CD8-positive, alpha-beta T cell (primary cell): ENCODE measurements at regions of chr10 and their contacts with region 1.

Region 1: GRCh38 chr10:119686439-119687191 is 35.4 kb downstream of the BAG3 start:
- DNase-seq: peak; percentile 52 to 89 (median 83)
- ATAC-seq: peak; percentile 95
- H3K4me3 ChIP-seq: peak overlapping the region; percentile 41 to 42
- H3K4me3 Mint-ChIP-seq: peak overlapping the region; percentile 79
- H3K27ac ChIP-seq: peak overlapping the region in 1 of 2 experiments; percentile 36
- H3K27ac Mint-ChIP-seq: peak overlapping the region; percentile 37
- H3K4me1 ChIP-seq: peaks cover 8% of the 10 kb centered on the region
- H3K4me1 Mint-ChIP-seq: peaks cover 16% of the 10 kb centered on the region
- H3K27me3 ChIP-seq: no peaks in the 10 kb centered on the region
- H3K27me3 Mint-ChIP-seq: peaks cover 4% of the 10 kb centered on the region
- CTCF ChIP-seq: peak; percentile 92

Region 2: DNA sequence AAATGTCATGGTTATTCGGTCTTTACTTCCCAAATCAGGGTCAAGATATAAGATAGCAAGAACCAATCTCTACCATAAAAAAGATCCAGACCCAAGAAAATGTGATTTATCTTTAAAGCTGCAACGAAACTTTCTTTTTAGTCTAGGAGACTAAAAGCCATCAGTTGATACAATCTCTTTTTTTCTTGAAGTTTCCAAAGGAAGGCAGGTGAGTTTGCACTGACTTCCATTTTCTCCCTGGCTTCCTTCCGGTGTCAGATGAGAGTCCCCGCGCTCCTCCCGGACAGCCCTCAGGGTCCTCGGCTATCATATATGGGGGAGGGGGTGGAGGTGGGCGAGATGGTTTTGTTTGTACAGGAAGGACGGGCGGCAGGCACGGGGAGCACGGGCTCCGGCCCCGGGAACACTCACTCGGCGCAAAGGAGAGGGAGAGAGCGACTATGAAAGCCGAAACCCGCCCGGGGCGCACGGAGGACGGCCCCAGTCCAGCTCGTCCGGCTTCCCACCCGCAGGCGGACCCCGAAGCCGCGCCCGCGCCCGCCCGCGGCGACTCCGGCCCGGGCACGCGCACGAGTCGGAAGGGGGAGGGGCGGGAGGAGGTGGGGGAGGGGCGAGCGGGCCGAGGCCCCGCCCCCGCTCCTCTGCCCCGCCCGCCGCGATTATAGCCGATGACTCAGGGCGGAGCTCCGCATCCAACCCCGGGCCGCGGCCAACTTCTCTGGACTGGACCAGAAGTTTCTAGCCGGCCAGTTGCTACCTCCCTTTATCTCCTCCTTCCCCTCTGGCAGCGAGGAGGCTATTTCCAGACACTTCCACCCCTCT is 35.7 kb before region 1 on chr10 and contains the start of gene BAG3:
- CTCF ChIA-PET with region 1: interaction called, 16 read pairs
- POLR2A ChIA-PET with region 1: interaction called, 4 read pairs
- intact Hi-C with region 1: loop called in 1 of 2 experiments (anchors 2 kb)
- DNase-seq: peak; percentile 57 to 88 (median 76)
- ATAC-seq: peak; percentile 76
- H3K4me3 ChIP-seq: peak within 1 kb of the TSS; percentile 94 to 95
- H3K4me3 Mint-ChIP-seq: peak within 1 kb of the TSS; percentile 98
- H3K27ac ChIP-seq: peak within 1 kb of the TSS; percentile 78 to 88
- H3K27ac Mint-ChIP-seq: peak within 1 kb of the TSS; percentile 95
- H3K4me1 ChIP-seq: peaks cover 36% of the 10 kb centered on the region
- H3K4me1 Mint-ChIP-seq: peaks cover 44% of the 10 kb centered on the region
- H3K27me3 ChIP-seq: no peaks in the 10 kb centered on the region
- H3K27me3 Mint-ChIP-seq: no peaks in the 10 kb centered on the region
- CTCF ChIP-seq: no peak
- total RNA-seq, gene BAG3: 20.6 to 21.8 TPM

Region 3: GRCh38 chr10:119670717-119671116 is 15.9 kb before region 1 on chr10:
- CTCF ChIA-PET with region 1: interaction called, 38 read pairs
- POLR2A ChIA-PET with region 1: no interaction called
- intact Hi-C with region 1: no loop called
- DNase-seq: no peak
- ATAC-seq: no peak
- H3K4me3 ChIP-seq: no peak overlapping the region
- H3K4me3 Mint-ChIP-seq: no peak overlapping the region
- H3K27ac ChIP-seq: no peak overlapping the region
- H3K27ac Mint-ChIP-seq: no peak overlapping the region
- H3K4me1 ChIP-seq: peaks cover 6% of the 10 kb centered on the region
- H3K4me1 Mint-ChIP-seq: peaks cover 8% of the 10 kb centered on the region
- H3K27me3 ChIP-seq: no peaks in the 10 kb centered on the region
- H3K27me3 Mint-ChIP-seq: no peaks in the 10 kb centered on the region
- CTCF ChIP-seq: no peak

Region 4: GRCh38 chr10:119750391-119751230 is 64.0 kb after region 1 on chr10:
- CTCF ChIA-PET with region 1: interaction called, 19 read pairs
- POLR2A ChIA-PET with region 1: no interaction called
- intact Hi-C with region 1: loop called (anchors 2 to 10 kb)
- DNase-seq: peak; percentile 6 to 74 (median 53)
- ATAC-seq: peak; percentile 95
- H3K4me3 ChIP-seq: no peak overlapping the region
- H3K4me3 Mint-ChIP-seq: no peak overlapping the region
- H3K27ac ChIP-seq: no peak overlapping the region
- H3K27ac Mint-ChIP-seq: no peak overlapping the region
- H3K4me1 ChIP-seq: no peaks in the 10 kb centered on the region
- H3K4me1 Mint-ChIP-seq: peaks cover 4% of the 10 kb centered on the region
- H3K27me3 ChIP-seq: no peaks in the 10 kb centered on the region
- H3K27me3 Mint-ChIP-seq: no peaks in the 10 kb centered on the region
- CTCF ChIP-seq: peak; percentile 77

Region 5: GRCh38 chr10:120336911-120337540 is 650.4 kb after region 1 on chr10:
- CTCF ChIA-PET with region 1: interaction called, 3 read pairs
- POLR2A ChIA-PET with region 1: no interaction called
- intact Hi-C with region 1: loop called in 1 of 2 experiments (anchors 2 kb)
- DNase-seq: peak; percentile 7 to 57 (median 43)
- ATAC-seq: no peak
- H3K4me3 ChIP-seq: no peak overlapping the region
- H3K4me3 Mint-ChIP-seq: no peak overlapping the region
- H3K27ac ChIP-seq: no peak overlapping the region
- H3K27ac Mint-ChIP-seq: no peak overlapping the region
- H3K4me1 ChIP-seq: no peaks in the 10 kb centered on the region
- H3K4me1 Mint-ChIP-seq: no peaks in the 10 kb centered on the region
- H3K27me3 ChIP-seq: no peaks in the 10 kb centered on the region
- H3K27me3 Mint-ChIP-seq: peaks cover 17% of the 10 kb centered on the region
- CTCF ChIP-seq: peak; percentile 62

Region 6: GRCh38 chr10:121188005-121188404 is 1501.4 kb after region 1 on chr10:
- CTCF ChIA-PET with region 1: no interaction called
- POLR2A ChIA-PET with region 1: no interaction called
- intact Hi-C with region 1: no loop called
- DNase-seq: no peak
- ATAC-seq: no peak
- H3K4me3 ChIP-seq: no peak overlapping the region
- H3K4me3 Mint-ChIP-seq: no peak overlapping the region
- H3K27ac ChIP-seq: no peak overlapping the region
- H3K27ac Mint-ChIP-seq: no peak overlapping the region
- H3K4me1 ChIP-seq: no peaks in the 10 kb centered on the region
- H3K4me1 Mint-ChIP-seq: no peaks in the 10 kb centered on the region
- H3K27me3 ChIP-seq: no peaks in the 10 kb centered on the region
- H3K27me3 Mint-ChIP-seq: no peaks in the 10 kb centered on the region
- CTCF ChIP-seq: no peak